Endothelial cell of umbilical vein (primary cell): ENCODE measurements at regions of chr10 and their contacts with region 1.

Region 1: DNA sequence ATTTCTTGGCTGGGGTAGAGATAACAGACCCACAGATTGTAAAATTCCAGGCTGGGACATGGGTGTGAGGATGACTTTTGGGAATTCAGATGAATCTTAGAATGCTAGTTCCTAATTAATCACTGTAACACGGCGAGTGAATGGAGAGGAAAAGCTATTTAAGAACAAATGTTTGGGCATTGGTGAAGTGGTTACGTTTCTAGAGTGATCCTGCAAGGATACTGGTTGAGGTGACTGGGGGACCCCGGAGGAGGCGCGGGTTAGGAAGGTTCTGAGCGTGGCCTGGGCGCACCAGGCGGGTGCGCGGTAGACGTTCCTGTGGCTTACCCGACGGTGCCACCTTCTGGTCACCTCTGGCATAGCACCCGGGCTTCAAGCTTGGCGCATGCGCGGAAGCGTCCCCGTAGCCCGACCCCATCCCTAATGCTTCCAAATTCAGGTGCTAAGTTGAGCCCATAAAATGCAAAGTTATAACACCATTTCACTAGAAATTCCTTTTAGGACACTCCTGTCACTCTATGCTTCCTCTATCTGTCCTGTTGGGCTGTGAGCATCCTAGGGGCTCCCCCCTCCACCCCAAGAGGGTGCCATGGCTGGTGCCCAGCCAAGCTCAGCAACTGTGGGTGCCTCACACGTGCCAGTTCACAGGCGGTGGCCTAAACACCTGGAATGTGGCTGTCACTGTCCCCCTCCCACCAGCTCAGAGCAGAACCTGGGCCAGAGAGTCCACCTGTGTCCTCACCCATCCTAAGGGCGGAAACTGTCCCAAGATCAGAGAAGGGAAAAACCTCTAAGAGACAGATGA is 104.5 kb downstream of the PTPRE start:
- DNase-seq: peak; percentile 81
- H3K4me3 ChIP-seq: no peak overlapping the region
- H3K27ac ChIP-seq: no peak overlapping the region
- H3K4me1 ChIP-seq: peaks cover 39% of the 10 kb centered on the region
- H3K27me3 ChIP-seq: no peaks in the 10 kb centered on the region
- CTCF ChIP-seq: peak; percentile 98
- POLR2A ChIP-seq: peak; percentile 43

Region 2: GRCh38 chr10:126749015-126749655 is 1262.2 kb before region 1 on chr10:
- CTCF ChIA-PET with region 1: no interaction called
- POLR2A ChIA-PET with region 1: no interaction called
- dilution Hi-C with region 1: no loop called
- intact Hi-C with region 1: no loop called
- DNase-seq: peak; percentile 69
- H3K4me3 ChIP-seq: no peak overlapping the region
- H3K27ac ChIP-seq: no peak overlapping the region
- H3K4me1 ChIP-seq: no peaks in the 10 kb centered on the region
- H3K27me3 ChIP-seq: no peaks in the 10 kb centered on the region
- CTCF ChIP-seq: peak; percentile 67 to 69
- POLR2A ChIP-seq: no peak

Region 3: GRCh38 chr10:127899766-127900387 is 111.5 kb before region 1 on chr10:
- CTCF ChIA-PET with region 1: interaction called, 425 read pairs
- POLR2A ChIA-PET with region 1: no interaction called
- dilution Hi-C with region 1: no loop called
- intact Hi-C with region 1: no loop called
- DNase-seq: no peak
- H3K4me3 ChIP-seq: no peak overlapping the region
- H3K27ac ChIP-seq: no peak overlapping the region
- H3K4me1 ChIP-seq: no peaks in the 10 kb centered on the region
- H3K27me3 ChIP-seq: peaks cover 0 to 4% of the 10 kb centered on the region in 2 experiments
- CTCF ChIP-seq: no peak
- POLR2A ChIP-seq: no peak

Region 4: GRCh38 chr10:127919418-127920271 is 91.7 kb before region 1 on chr10:
- CTCF ChIA-PET with region 1: interaction called, 68 read pairs
- POLR2A ChIA-PET with region 1: no interaction called
- dilution Hi-C with region 1: no loop called
- intact Hi-C with region 1: loop called (anchors 1 kb)
- DNase-seq: peak; percentile 83
- H3K4me3 ChIP-seq: no peak overlapping the region
- H3K27ac ChIP-seq: peak overlapping the region; percentile 31
- H3K4me1 ChIP-seq: peaks cover 53% of the 10 kb centered on the region
- H3K27me3 ChIP-seq: no peaks in the 10 kb centered on the region
- CTCF ChIP-seq: peak; percentile 57 to 61
- POLR2A ChIP-seq: no peak

Region 5: GRCh38 chr10:127962205-127962604 is 49.2 kb before region 1 on chr10:
- CTCF ChIA-PET with region 1: no interaction called
- POLR2A ChIA-PET with region 1: no interaction called
- dilution Hi-C with region 1: no loop called
- intact Hi-C with region 1: no loop called
- DNase-seq: no peak
- H3K4me3 ChIP-seq: no peak overlapping the region
- H3K27ac ChIP-seq: no peak overlapping the region
- H3K4me1 ChIP-seq: peaks cover 9% of the 10 kb centered on the region
- H3K27me3 ChIP-seq: no peaks in the 10 kb centered on the region
- CTCF ChIP-seq: no peak
- POLR2A ChIP-seq: no peak

Region 6: GRCh38 chr10:127990846-127991542 is 20.4 kb before region 1 on chr10:
- CTCF ChIA-PET with region 1: interaction called, 23 read pairs
- POLR2A ChIA-PET with region 1: no interaction called
- dilution Hi-C with region 1: no loop called
- intact Hi-C with region 1: loop called (anchors 1 kb)
- DNase-seq: peak; percentile 97
- H3K4me3 ChIP-seq: peak overlapping the region in 1 of 3 experiments; percentile 83
- H3K27ac ChIP-seq: peak overlapping the region; percentile 94
- H3K4me1 ChIP-seq: peaks cover 72% of the 10 kb centered on the region
- H3K27me3 ChIP-seq: no peaks in the 10 kb centered on the region
- CTCF ChIP-seq: no peak
- POLR2A ChIP-seq: peak; percentile 60

Region 7: DNA sequence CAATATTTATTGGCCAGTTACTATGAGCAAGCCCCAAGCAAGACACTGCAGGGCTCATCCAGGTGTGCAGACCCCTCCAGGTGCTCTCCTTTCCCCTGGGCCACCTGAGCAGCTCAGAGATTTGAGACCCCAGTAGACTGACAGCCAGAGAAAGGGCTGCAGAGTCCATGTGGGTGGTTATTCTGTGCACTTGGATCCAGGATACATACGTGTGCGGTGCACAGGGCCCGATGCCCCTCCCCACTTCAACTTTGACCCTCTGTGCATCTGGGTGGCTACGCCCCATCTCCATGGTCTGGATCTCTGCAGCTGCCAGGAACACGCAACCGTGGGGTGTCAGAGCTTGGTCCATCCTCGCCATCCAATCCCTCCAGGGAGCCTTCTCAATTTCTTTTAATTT is 42.0 kb after region 1 on chr10:
- CTCF ChIA-PET with region 1: no interaction called
- POLR2A ChIA-PET with region 1: no interaction called
- dilution Hi-C with region 1: no loop called
- intact Hi-C with region 1: no loop called
- DNase-seq: no peak
- H3K4me3 ChIP-seq: no peak overlapping the region
- H3K27ac ChIP-seq: no peak overlapping the region
- H3K4me1 ChIP-seq: no peaks in the 10 kb centered on the region
- H3K27me3 ChIP-seq: no peaks in the 10 kb centered on the region
- CTCF ChIP-seq: no peak
- POLR2A ChIP-seq: no peak

Region 8: GRCh38 chr10:128064108-128064969 is 53.0 kb after region 1 on chr10:
- CTCF ChIA-PET with region 1: interaction called, 57 read pairs
- POLR2A ChIA-PET with region 1: no interaction called
- dilution Hi-C with region 1: no loop called
- intact Hi-C with region 1: loop called (anchors 1 kb)
- DNase-seq: no peak
- H3K4me3 ChIP-seq: no peak overlapping the region
- H3K27ac ChIP-seq: no peak overlapping the region
- H3K4me1 ChIP-seq: peaks cover 28% of the 10 kb centered on the region
- H3K27me3 ChIP-seq: no peaks in the 10 kb centered on the region
- CTCF ChIP-seq: no peak
- POLR2A ChIP-seq: no peak

Region 9: DNA sequence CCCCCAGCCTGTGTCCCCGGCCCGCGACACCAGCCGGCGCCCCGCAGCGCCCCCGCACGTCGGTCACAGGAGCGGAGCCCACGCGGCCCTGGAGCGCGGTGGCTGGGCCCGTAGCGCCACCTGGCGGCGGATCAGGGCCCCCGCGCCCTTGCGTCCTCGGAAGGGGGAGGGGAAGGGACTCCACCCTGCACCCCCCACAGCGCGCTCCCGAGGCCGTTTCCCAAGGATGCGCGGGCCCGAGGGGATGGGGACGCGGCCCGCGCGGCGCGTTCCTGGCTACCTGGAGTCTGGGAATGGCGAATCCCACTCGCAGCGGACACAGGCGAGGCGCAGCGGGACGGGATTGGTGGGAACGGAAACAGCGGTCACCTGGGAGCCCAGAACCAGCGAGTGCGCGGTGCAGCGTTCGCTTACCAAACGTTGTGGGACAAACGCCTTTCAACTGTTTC is 138.7 kb after region 1 on chr10:
- CTCF ChIA-PET with region 1: no interaction called
- POLR2A ChIA-PET with region 1: no interaction called
- dilution Hi-C with region 1: no loop called
- intact Hi-C with region 1: loop called (anchors 5 kb)
- DNase-seq: peak; percentile 61
- H3K4me3 ChIP-seq: peak overlapping the region in 2 of 3 experiments; percentile 47 to 60
- H3K27ac ChIP-seq: no peak overlapping the region
- H3K4me1 ChIP-seq: no peaks in the 10 kb centered on the region
- H3K27me3 ChIP-seq: peaks cover 6 to 15% of the 10 kb centered on the region in 2 experiments
- CTCF ChIP-seq: peak; percentile 93 to 97
- POLR2A ChIP-seq: no peak